IMR-90 (cell line): ENCODE measurements at regions of chr15 and their contacts with region 1.

Region 1: GRCh38 chr15:91055548-91056331 is 33.3 kb upstream of the VPS33B start:
- DNase-seq: peak; percentile 55
- ATAC-seq: peak; percentile 97
- H3K4me3 ChIP-seq: no peak overlapping the region
- H3K27ac ChIP-seq: no peak overlapping the region
- H3K4me1 ChIP-seq: peaks cover 2% of the 10 kb centered on the region; the same call in 1 of the 2 replicates
- H3K27me3 ChIP-seq: peaks cover 10% of the 10 kb centered on the region
- CTCF ChIP-seq: peak; percentile 68
- POLR2A ChIP-seq: no peak
- RAD21 ChIP-seq: peak; percentile 68

Region 2: GRCh38 chr15:91224755-91225380 is 169.1 kb after region 1 on chr15:
- CTCF ChIA-PET with region 1: interaction called, 3 read pairs
- POLR2A ChIA-PET with region 1: no interaction called
- dilution Hi-C with region 1: no loop called
- in situ Hi-C with region 1: loop called (anchors 5 kb)
- intact Hi-C with region 1: loop called (anchors 1 kb)
- DNase-seq: peak; percentile 41
- ATAC-seq: peak; percentile 57
- H3K4me3 ChIP-seq: no peak overlapping the region
- H3K27ac ChIP-seq: no peak overlapping the region
- H3K4me1 ChIP-seq: no peaks in the 10 kb centered on the region
- H3K27me3 ChIP-seq: no peaks in the 10 kb centered on the region; the same call in 1 of the 2 replicates
- CTCF ChIP-seq: peak; percentile 58
- POLR2A ChIP-seq: no peak
- RAD21 ChIP-seq: peak; percentile 55

Region 3: DNA sequence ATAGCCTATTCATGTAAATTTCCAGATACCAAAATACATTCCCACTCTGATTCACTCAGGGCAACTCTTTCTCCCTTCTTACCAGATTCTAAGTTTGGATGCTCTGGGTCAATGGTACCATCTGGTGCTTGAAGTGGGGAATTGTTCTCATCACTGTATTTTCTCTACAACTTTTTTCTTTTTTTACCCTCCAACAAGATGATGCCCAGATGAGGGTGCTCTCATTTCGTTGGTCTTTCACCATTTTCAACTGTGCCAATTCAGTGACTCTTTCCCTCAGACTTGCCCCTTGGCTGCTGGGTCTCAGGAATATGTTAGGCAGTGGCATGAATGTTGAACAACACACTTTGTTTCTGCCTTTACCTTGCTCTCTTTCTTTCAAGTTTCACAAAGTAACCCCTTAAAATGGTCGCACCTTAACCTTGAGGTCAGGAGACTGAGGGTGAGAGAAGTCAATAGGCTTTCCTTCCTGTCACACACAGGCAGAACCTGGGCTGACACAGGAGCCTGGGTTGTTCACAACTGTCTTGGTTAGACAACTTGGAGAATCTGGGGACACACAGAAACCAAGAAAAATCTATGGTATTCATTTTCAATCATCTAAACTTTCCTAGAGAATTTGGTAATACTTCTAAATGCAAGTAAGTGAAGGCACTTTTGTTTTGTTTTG is 467.1 kb after region 1 on chr15:
- CTCF ChIA-PET with region 1: no interaction called
- POLR2A ChIA-PET with region 1: no interaction called
- dilution Hi-C with region 1: no loop called
- in situ Hi-C with region 1: no loop called
- intact Hi-C with region 1: loop called (anchors 5 kb)
- DNase-seq: peak; percentile 80
- ATAC-seq: peak; percentile 81
- H3K4me3 ChIP-seq: no peak overlapping the region
- H3K27ac ChIP-seq: no peak overlapping the region
- H3K4me1 ChIP-seq: peaks cover 9% of the 10 kb centered on the region
- H3K27me3 ChIP-seq: no peaks in the 10 kb centered on the region
- CTCF ChIP-seq: peak; percentile 94
- POLR2A ChIP-seq: peak; percentile 62; the same call in 1 of the 2 replicates
- RAD21 ChIP-seq: peak; percentile 97